ENCODE measurements at regions of chr6 and their contacts with region 1.

Region 1: DNA sequence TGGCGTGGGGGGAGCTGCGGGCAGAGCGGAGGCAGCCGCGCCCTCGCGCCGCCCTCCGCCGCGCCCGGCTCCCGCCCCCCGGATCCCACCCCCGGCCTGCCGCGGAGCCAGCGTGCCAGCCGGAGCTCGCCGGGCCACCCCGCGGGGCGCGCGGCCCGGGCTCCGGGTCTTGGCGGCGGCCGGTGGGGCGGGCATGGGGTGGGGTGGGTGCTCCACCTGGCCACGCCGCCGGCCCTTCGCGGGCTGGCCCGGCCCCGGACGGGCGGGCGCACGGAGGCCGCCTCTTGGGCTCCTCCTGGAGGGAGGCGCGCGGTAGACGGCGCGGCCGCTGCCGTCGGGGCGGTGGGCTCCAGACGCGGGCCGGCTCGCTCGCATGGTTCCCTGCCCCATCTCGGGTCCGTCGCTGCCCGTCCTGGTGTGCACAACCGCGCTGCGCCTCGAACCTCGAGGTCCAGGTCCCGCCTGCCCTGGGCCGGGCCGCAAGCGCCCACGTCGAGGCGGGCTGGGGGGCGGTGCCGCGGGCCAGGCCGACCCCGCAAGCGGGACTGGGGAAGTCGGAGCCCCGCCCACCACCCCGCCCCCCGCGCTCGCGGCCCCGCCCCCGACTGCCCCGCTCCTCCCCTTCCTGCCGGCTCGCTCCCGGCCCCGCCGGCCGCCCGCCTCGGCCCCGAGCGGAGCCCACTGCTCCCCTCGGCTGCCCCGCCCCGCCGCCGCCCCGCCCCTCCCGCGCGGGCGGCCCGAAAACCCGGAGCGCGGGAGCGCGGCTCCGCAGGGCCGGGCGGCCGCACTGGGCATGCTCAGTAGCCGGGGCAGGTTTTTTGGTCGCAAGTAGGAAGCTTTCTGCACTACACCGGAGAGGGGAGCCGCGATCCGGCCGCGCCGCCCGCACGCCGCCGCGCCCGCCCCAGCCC is at the start of gene CDYL:
- DNase-seq: peak; percentile 90 to 94
- ATAC-seq: peak; percentile 77 to 92 (median 80)
- H3K4me3 ChIP-seq: peak within 1 kb of the TSS; percentile 53
- H3K4me3 Mint-ChIP-seq: peak within 1 kb of the TSS; percentile 97
- H3K27ac ChIP-seq: peak within 1 kb of the TSS; percentile 46
- H3K27ac Mint-ChIP-seq: peak within 1 kb of the TSS; percentile 88 to 95
- H3K4me1 ChIP-seq: peaks cover 10% of the 10 kb centered on the region
- H3K4me1 Mint-ChIP-seq: peaks cover 43 to 45% of the 10 kb centered on the region in 2 donors
- H3K27me3 ChIP-seq: no peaks in the 10 kb centered on the region
- H3K27me3 Mint-ChIP-seq: no peaks in the 10 kb centered on the region
- CTCF ChIP-seq: no peak
- total RNA-seq, gene CDYL: 81.3 to 101 (median 83.8) TPM

Region 2: GRCh38 chr6:4135665-4136353 is 640.0 kb before region 1 on chr6:
- intact Hi-C with region 1: loop called (anchors 10 kb)
- DNase-seq: peak; percentile 80 to 96
- ATAC-seq: peak; percentile 84 to 94 (median 91)
- H3K4me3 ChIP-seq: peak overlapping the region; percentile 74
- H3K4me3 Mint-ChIP-seq: peak overlapping the region; percentile 81
- H3K27ac ChIP-seq: peak overlapping the region; percentile 46
- H3K27ac Mint-ChIP-seq: peak overlapping the region; percentile 34 to 94
- H3K4me1 ChIP-seq: peaks cover 12% of the 10 kb centered on the region
- H3K4me1 Mint-ChIP-seq: peaks cover 19 to 26% of the 10 kb centered on the region in 2 donors
- H3K27me3 ChIP-seq: no peaks in the 10 kb centered on the region
- H3K27me3 Mint-ChIP-seq: peaks cover 5 to 20% of the 10 kb centered on the region in 2 donors
- CTCF ChIP-seq: no peak

Region 3: GRCh38 chr6:4788953-4789584 is 13.2 kb after region 1 on chr6:
- intact Hi-C with region 1: loop called (anchors 2 kb)
- DNase-seq: no peak
- ATAC-seq: no peak
- H3K4me3 ChIP-seq: no peak overlapping the region
- H3K4me3 Mint-ChIP-seq: peak overlapping the region; percentile 89
- H3K27ac ChIP-seq: no peak overlapping the region
- H3K27ac Mint-ChIP-seq: peak overlapping the region; percentile 89 to 90
- H3K4me1 ChIP-seq: peaks cover 31% of the 10 kb centered on the region
- H3K4me1 Mint-ChIP-seq: peaks cover 58 to 60% of the 10 kb centered on the region in 2 donors
- H3K27me3 ChIP-seq: no peaks in the 10 kb centered on the region
- H3K27me3 Mint-ChIP-seq: no peaks in the 10 kb centered on the region
- CTCF ChIP-seq: no peak

Region 4: GRCh38 chr6:4820704-4821276 is 45.0 kb after region 1 on chr6:
- intact Hi-C with region 1: no loop called
- DNase-seq: no peak
- ATAC-seq: no peak
- H3K4me3 ChIP-seq: no peak overlapping the region
- H3K4me3 Mint-ChIP-seq: no peak overlapping the region
- H3K27ac ChIP-seq: no peak overlapping the region
- H3K27ac Mint-ChIP-seq: peak overlapping the region in 1 of 2 donors; percentile 55
- H3K4me1 ChIP-seq: peaks cover 13% of the 10 kb centered on the region
- H3K4me1 Mint-ChIP-seq: peaks cover 55 to 56% of the 10 kb centered on the region in 2 donors
- H3K27me3 ChIP-seq: no peaks in the 10 kb centered on the region
- H3K27me3 Mint-ChIP-seq: no peaks in the 10 kb centered on the region
- CTCF ChIP-seq: no peak

Region 5: GRCh38 chr6:4853782-4854511 is 78.1 kb after region 1 on chr6:
- intact Hi-C with region 1: no loop called
- DNase-seq: no peak
- ATAC-seq: peak in 2 of 3 donors; percentile 57 to 72
- H3K4me3 ChIP-seq: no peak overlapping the region
- H3K4me3 Mint-ChIP-seq: no peak overlapping the region
- H3K27ac ChIP-seq: no peak overlapping the region
- H3K27ac Mint-ChIP-seq: peak overlapping the region; percentile 23 to 65
- H3K4me1 ChIP-seq: peaks cover 11% of the 10 kb centered on the region
- H3K4me1 Mint-ChIP-seq: peaks cover 93 to 96% of the 10 kb centered on the region in 2 donors
- H3K27me3 ChIP-seq: no peaks in the 10 kb centered on the region
- H3K27me3 Mint-ChIP-seq: no peaks in the 10 kb centered on the region
- CTCF ChIP-seq: no peak

Region 6: DNA sequence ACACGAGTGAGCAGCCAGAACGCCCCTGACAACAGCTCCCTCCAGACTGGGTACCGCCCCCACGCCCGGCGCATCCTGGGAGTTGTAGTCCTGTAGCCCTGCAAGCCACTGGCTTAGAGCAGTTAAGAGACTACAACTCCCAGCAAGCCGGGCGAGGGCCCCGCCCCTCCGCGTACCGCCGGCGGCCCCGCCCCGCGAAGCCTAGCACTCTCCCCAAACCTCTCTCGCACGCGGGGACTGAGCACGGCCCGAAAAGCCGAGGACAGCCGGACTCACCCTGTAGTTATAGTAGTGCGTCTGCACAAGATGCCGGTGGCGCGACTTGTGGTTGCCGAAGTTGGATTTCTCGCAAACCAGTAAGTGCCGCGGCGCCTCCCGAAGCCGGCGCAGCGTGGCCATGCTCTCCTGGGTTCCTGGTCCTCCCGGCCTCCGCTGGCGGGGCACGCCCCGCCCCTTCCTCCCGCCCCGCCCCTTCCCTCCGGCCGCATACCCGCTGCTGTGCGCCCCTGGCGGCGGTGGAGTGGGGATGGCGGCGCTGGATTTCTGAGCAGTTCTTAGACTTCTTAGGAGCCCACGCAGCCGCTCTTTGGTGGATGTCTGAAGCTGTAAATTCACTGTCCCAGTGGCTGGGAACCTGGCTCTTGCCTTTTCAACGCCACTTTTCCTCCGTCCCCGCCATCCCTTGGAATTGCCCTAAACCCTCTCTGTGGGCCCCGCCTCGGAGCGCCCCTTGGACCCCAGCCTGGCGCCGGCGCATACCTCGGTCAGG is 227.9 kb after region 1 on chr6 and contains the start of gene RPP40:
- intact Hi-C with region 1: loop called (anchors 5 kb)
- DNase-seq: peak; percentile 97 to 98
- ATAC-seq: peak; percentile 94 to 99 (median 95)
- H3K4me3 ChIP-seq: peak within 1 kb of the TSS; percentile 73
- H3K4me3 Mint-ChIP-seq: peak within 1 kb of the TSS; percentile 92
- H3K27ac ChIP-seq: peak within 1 kb of the TSS; percentile 74
- H3K27ac Mint-ChIP-seq: peak within 1 kb of the TSS; percentile 86 to 92
- H3K4me1 ChIP-seq: peaks cover 12% of the 10 kb centered on the region
- H3K4me1 Mint-ChIP-seq: peaks cover 14 to 16% of the 10 kb centered on the region in 2 donors
- H3K27me3 ChIP-seq: no peaks in the 10 kb centered on the region
- H3K27me3 Mint-ChIP-seq: no peaks in the 10 kb centered on the region
- CTCF ChIP-seq: peak; percentile 88
- total RNA-seq, gene RPP40: 1.3 to 1.7 (median 1.3) TPM

Measured in natural killer cell (primary cell).